Endothelial cell of umbilical vein (primary cell): ENCODE measurements at regions of chr2 and their contacts with region 1.

Region 1: GRCh38 chr2:209495855-209496585 is 72.2 kb downstream of the MAP2 start:
- DNase-seq: peak; percentile 99
- H3K4me3 ChIP-seq: peak overlapping the region in 1 of 3 experiments; percentile 52
- H3K27ac ChIP-seq: peak overlapping the region; percentile 100
- H3K4me1 ChIP-seq: peaks cover 30% of the 10 kb centered on the region
- H3K27me3 ChIP-seq: no peaks in the 10 kb centered on the region
- CTCF ChIP-seq: no peak
- POLR2A ChIP-seq: peak; percentile 46

Region 2: DNA sequence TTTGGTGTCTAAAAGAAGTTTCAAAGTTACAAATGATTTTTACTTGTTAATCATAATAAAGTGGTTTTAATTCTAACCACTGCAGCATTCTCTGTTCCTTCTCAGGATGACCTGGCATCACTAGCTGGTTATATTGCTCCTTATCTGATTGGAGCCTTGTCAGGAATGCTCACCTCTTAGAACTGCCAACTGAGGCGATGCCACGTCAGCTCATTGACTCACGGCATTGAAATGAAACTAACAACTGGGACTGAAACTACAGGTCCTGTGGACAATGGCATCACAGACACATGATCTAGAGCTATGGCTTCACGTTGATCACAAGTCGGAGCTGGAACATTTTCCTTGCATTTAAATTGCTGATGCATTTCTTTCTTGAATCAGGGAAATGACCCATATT is 127.1 kb before region 1 on chr2:
- CTCF ChIA-PET with region 1: interaction called, 4 read pairs
- POLR2A ChIA-PET with region 1: no interaction called
- dilution Hi-C with region 1: no loop called
- intact Hi-C with region 1: loop called (anchors 1 kb)
- DNase-seq: peak; percentile 96
- H3K4me3 ChIP-seq: no peak overlapping the region
- H3K27ac ChIP-seq: peak overlapping the region; percentile 4
- H3K4me1 ChIP-seq: peaks cover 23% of the 10 kb centered on the region
- H3K27me3 ChIP-seq: no peaks in the 10 kb centered on the region
- CTCF ChIP-seq: no peak
- POLR2A ChIP-seq: no peak

Region 3: DNA sequence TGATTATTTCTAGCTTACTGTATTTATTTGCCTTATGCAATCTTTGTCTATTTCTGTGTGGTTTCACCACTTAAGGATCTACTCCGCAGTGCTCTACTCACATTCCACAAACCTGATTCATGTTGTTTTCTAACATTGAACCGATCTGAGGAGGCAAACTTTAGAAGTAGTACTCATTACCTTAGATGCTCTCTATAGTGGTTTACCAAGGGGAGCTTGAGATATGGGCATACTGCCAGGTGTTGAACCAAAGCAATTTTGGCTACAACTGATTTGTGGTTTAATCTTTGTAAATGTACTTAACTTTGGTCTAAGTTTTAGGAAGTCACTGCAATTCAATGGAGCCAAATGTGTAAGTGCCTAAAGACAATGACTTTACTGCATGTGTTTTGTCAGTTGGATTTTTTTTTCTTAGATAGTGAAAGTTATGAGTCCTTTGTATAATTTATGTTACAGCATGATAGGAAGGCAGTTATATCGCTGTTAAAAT is 22.0 kb before region 1 on chr2:
- CTCF ChIA-PET with region 1: interaction called, 10 read pairs
- POLR2A ChIA-PET with region 1: interaction called, 3 read pairs
- dilution Hi-C with region 1: no loop called
- intact Hi-C with region 1: loop called (anchors 1 kb)
- DNase-seq: peak; percentile 80
- H3K4me3 ChIP-seq: no peak overlapping the region
- H3K27ac ChIP-seq: peak overlapping the region; percentile 54
- H3K4me1 ChIP-seq: peaks cover 42% of the 10 kb centered on the region
- H3K27me3 ChIP-seq: no peaks in the 10 kb centered on the region
- CTCF ChIP-seq: no peak
- POLR2A ChIP-seq: no peak

Region 4: DNA sequence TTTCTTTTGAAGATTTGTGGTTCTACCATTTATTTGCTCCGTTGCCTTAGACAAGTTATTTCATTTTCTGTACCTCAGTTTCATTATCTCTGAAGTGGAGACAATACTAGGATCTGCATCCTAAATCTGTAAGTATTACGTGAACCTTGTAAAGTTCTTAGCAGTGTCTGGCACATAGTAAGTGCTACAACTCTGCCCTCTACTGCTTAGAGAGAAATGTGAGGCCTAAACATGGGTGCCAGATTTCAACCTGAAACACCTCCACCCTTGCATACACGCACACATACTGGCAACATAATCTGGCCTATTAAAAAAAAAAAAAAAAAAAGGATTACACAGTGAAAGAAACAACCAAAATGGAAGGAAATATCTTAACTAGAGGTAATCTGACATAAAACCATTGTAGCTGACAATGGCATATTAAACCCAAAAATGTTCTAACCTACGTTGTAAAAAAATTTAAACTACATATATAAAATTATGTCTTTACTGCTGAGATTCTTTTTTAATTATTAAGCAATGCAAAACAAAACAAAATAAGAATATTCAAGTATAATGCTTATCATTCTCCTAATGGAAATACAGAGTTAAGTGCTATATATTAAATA is 60.4 kb after region 1 on chr2:
- CTCF ChIA-PET with region 1: interaction called, 8 read pairs
- POLR2A ChIA-PET with region 1: no interaction called
- dilution Hi-C with region 1: no loop called
- intact Hi-C with region 1: loop called (anchors 1 kb)
- DNase-seq: peak; percentile 70
- H3K4me3 ChIP-seq: no peak overlapping the region
- H3K27ac ChIP-seq: no peak overlapping the region
- H3K4me1 ChIP-seq: no peaks in the 10 kb centered on the region
- H3K27me3 ChIP-seq: no peaks in the 10 kb centered on the region
- CTCF ChIP-seq: peak; percentile 48 to 57
- POLR2A ChIP-seq: no peak

Region 5: GRCh38 chr2:209685963-209686362 is 189.9 kb after region 1 on chr2:
- CTCF ChIA-PET with region 1: no interaction called
- POLR2A ChIA-PET with region 1: no interaction called
- dilution Hi-C with region 1: no loop called
- intact Hi-C with region 1: no loop called
- DNase-seq: no peak
- H3K4me3 ChIP-seq: no peak overlapping the region
- H3K27ac ChIP-seq: no peak overlapping the region
- H3K4me1 ChIP-seq: no peaks in the 10 kb centered on the region
- H3K27me3 ChIP-seq: no peaks in the 10 kb centered on the region
- CTCF ChIP-seq: no peak
- POLR2A ChIP-seq: no peak